ENCODE measurements at regions of chr10 and their contacts with region 1.

Region 1: DNA sequence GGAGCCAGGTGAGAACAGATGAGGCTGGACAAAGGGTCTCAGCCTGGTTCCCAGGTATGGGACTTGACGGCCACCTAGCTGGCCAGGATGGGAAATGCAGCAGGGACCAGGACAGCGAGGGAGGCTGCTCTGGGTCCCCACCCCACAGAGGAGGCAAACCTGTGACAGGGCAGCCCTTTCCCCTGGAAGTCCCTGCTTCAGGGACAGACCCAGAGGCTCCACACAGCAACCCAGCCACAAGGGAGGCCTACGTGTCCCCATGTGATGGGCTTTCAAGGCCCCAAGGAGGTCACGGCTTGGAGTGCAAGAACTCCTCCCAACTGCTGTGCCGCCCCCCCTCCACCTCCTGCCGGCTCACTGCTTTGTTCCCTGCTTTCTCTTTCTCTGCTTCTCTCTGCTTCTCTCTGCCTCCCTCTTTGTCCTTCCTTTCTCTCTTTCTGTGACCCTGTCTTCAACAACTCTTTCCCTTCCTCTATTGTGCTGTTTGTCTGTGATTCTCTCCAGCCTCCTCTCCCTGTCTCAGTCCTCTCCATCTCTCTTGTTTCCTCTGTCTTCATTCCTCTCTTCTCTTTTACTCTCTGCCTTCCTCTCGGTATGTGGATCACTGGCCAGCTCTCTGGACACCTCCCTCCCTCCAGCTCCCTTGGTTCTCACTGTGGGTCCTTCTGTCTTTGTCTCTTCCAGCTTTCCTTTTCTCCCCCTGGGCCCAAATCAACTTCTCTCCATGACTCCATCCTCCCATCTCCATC is 9.6 kb upstream of the EIF5AL1 start:
- DNase-seq: peak; percentile 29 to 78
- H3K4me3 ChIP-seq: no peak overlapping the region
- H3K27ac ChIP-seq: no peak overlapping the region
- H3K4me1 ChIP-seq: no peaks in the 10 kb centered on the region
- H3K27me3 ChIP-seq: no peaks in the 10 kb centered on the region; a peak in 3 of 7 replicates
- CTCF ChIP-seq: peak; percentile 66 to 75 (median 71)
- EP300 ChIP-seq: no peak
- POLR2A ChIP-seq: no peak
- RAD21 ChIP-seq: peak; percentile 72 to 74

Region 2: GRCh38 chr10:79390551-79391209 is 112.1 kb before region 1 on chr10:
- CTCF ChIA-PET with region 1: interaction called, 18 read pairs
- POLR2A ChIA-PET with region 1: no interaction called
- DNase-seq: peak in 1 of 2 experiments; percentile 40
- H3K4me3 ChIP-seq: no peak overlapping the region
- H3K27ac ChIP-seq: no peak overlapping the region
- H3K4me1 ChIP-seq: peaks cover 0 to 1% (median 0%) of the 10 kb centered on the region in 4 experiments; a peak in 2 of 7 replicates
- H3K27me3 ChIP-seq: no peaks in the 10 kb centered on the region; a peak in 1 of 7 replicates
- CTCF ChIP-seq: 0 out of 4 replicates have a peak, but pooled peaks of 1 of the 3 experiments have one; percentile 6
- EP300 ChIP-seq: no peak
- POLR2A ChIP-seq: no peak
- RAD21 ChIP-seq: no peak

Region 3: DNA sequence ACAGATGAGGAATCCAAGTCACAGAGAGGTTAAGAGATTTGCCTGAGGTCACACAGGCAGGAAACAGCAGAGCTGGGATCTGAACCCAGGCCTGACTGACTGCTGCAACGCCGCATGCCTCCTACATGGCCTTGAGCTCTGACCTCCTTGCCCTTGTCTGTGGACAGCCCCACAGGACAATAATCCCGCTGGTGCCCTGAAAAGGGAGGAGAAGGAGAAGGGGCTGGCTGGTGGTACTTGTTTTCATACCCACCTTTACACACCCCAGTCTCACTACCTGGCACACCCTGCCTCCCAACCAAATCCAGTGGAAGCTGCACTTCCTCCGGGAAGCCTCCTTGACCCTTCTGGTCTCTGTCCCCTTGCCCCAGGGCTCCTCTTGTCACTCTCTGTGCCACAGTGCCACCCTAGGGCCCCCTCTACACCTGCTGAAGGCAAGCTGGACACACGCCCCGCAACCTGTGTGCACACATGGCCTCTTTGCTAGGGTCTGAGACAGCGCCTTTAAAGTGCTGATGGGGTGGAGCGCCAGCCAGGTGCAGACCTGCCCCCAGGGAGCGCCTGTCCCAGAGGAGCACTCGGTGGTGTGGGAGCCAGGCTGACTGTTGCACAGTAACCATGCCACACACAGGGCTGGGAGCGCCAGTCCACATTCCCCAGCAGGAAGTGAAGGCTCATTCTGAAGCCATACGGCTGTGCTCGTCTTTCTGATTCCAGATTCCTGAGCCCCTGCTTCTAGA is 95.9 kb before region 1 on chr10:
- CTCF ChIA-PET with region 1: no interaction called
- POLR2A ChIA-PET with region 1: no interaction called
- DNase-seq: no peak
- H3K4me3 ChIP-seq: no peak overlapping the region
- H3K27ac ChIP-seq: no peak overlapping the region
- H3K4me1 ChIP-seq: peaks cover 0 to 22% (median 11%) of the 10 kb centered on the region in 4 experiments; a peak in 6 of 7 replicates
- H3K27me3 ChIP-seq: no peaks in the 10 kb centered on the region; a peak in 1 of 7 replicates
- CTCF ChIP-seq: no peak
- EP300 ChIP-seq: no peak
- POLR2A ChIP-seq: no peak
- RAD21 ChIP-seq: no peak

Measured in H1 (cell line).